ENCODE measurements at regions of chr11 and their contacts with region 1.

Region 1: GRCh38 chr11:11621573-11622319 is at the start of gene GALNT18:
- DNase-seq: no peak
- ATAC-seq: peak; percentile 94
- H3K4me3 ChIP-seq: peak within 1 kb of the TSS; percentile 62 to 67
- H3K27ac ChIP-seq: peak within 1 kb of the TSS; percentile 70
- H3K4me1 ChIP-seq: peaks cover 16% of the 10 kb centered on the region
- H3K27me3 ChIP-seq: no peaks in the 10 kb centered on the region
- CTCF ChIP-seq: peak; percentile 48
- total RNA-seq, gene GALNT18: 8.6 TPM

Region 2: DNA sequence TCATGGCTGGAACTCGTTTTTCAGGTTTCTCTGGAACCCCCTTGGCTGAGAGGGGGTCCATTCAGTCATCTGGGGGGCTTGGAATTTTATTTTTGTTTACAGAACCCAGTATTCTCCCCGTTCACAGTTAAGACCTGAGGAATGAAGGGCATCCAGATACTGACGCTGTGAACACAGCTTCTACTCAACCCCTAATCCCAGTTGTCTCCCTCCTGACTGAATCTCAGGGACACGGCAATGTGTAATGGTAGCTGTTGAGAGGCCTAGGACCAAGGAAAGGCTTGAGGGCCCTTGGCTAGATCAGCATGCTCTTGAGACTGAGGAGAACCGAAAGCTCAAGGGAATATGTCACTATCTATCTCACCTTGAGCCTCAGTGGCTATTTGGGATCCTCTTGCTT is 1844.2 kb before region 1 on chr11:
- CTCF ChIA-PET with region 1: interaction called, 11 read pairs
- POLR2A ChIA-PET with region 1: no interaction called
- in situ Hi-C with region 1: no loop called
- intact Hi-C with region 1: no loop called
- DNase-seq: no peak
- ATAC-seq: no peak
- H3K4me3 ChIP-seq: no peak overlapping the region
- H3K27ac ChIP-seq: peak overlapping the region; percentile 88
- H3K4me1 ChIP-seq: peaks cover 35% of the 10 kb centered on the region
- H3K27me3 ChIP-seq: no peaks in the 10 kb centered on the region
- CTCF ChIP-seq: no peak

Region 3: DNA sequence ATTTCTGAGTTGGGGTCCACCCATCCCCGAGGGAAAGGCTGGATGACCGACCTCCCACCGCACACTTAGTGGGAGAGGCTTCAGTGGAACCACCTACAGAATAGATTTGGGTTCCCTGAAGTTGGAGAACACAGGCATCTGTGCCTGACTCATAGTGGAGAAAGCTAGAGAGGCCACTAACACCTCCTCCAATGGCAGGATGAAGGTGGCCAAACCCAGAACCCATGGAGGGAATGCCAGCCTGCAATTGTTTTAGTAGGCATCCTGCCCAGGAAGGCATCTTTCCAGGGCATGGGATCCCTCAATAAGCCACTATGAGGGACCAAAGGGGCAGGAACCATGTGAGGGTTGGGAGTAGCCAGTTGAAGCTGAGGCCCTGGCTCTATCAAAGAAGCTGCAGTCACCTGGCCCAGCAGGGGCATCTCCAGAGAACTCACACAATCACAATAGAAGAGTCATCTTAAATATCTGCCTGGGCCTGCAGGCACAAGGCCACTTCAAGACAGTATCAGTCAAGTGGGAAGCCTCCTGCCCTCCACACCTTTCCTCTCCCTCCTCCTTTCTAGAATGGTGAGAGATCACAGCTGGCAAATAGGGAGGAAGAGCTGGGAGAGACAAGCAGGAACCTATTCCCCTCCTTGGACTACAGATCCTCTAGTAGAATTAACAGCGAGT is 144.6 kb before region 1 on chr11:
- CTCF ChIA-PET with region 1: no interaction called
- POLR2A ChIA-PET with region 1: no interaction called
- in situ Hi-C with region 1: no loop called
- intact Hi-C with region 1: no loop called
- DNase-seq: no peak
- ATAC-seq: no peak
- H3K4me3 ChIP-seq: no peak overlapping the region
- H3K27ac ChIP-seq: no peak overlapping the region
- H3K4me1 ChIP-seq: no peaks in the 10 kb centered on the region
- H3K27me3 ChIP-seq: no peaks in the 10 kb centered on the region
- CTCF ChIP-seq: no peak

Region 4: GRCh38 chr11:11584446-11584810 is 37.3 kb before region 1 on chr11:
- CTCF ChIA-PET with region 1: no interaction called
- POLR2A ChIA-PET with region 1: no interaction called
- in situ Hi-C with region 1: no loop called
- intact Hi-C with region 1: no loop called
- DNase-seq: peak; percentile 63
- ATAC-seq: peak; percentile 96
- H3K4me3 ChIP-seq: peak overlapping the region; percentile 5 to 7; a peak in 1 of 4 replicates
- H3K27ac ChIP-seq: peak overlapping the region; percentile 90
- H3K4me1 ChIP-seq: peaks cover 48% of the 10 kb centered on the region
- H3K27me3 ChIP-seq: no peaks in the 10 kb centered on the region
- CTCF ChIP-seq: no peak

Region 5: GRCh38 chr11:11717064-11717725 is 95.4 kb after region 1 on chr11:
- CTCF ChIA-PET with region 1: no interaction called
- POLR2A ChIA-PET with region 1: no interaction called
- in situ Hi-C with region 1: no loop called
- intact Hi-C with region 1: no loop called
- DNase-seq: no peak
- ATAC-seq: no peak
- H3K4me3 ChIP-seq: no peak overlapping the region
- H3K27ac ChIP-seq: no peak overlapping the region
- H3K4me1 ChIP-seq: no peaks in the 10 kb centered on the region
- H3K27me3 ChIP-seq: peaks cover 5% of the 10 kb centered on the region
- CTCF ChIP-seq: no peak

Measured in Panc1 (cell line).